ENCODE measurements at regions of chr18 and their contacts with region 1.

Region 1: DNA sequence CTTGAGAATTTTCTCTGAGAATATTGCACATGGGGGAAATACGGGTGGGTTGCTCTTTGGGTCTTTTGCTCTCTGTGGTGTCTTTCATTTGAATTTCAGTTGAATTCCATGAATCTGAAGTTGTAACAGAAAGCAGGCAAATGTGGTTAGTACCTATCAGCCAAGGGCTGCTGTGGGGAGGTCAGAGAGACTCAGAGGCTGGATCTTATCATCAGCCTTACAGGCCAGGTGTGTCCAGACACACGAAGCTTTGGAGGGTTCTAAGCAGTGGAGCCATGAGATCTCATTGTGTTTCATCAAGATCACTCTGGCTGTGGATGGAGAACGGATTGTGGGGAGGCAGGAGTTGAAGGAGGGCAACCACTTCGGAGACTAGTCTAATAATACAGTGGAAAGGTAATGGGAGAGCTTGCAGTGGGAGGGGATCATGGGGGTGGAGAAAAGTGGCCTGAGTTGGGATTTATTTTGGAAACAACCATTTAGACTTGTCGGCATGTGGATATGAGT is 68.1 kb downstream of the GNAL start:
- DNase-seq: no peak
- H3K27ac ChIP-seq: no peak overlapping the region
- CTCF ChIP-seq: no peak

Region 2: DNA sequence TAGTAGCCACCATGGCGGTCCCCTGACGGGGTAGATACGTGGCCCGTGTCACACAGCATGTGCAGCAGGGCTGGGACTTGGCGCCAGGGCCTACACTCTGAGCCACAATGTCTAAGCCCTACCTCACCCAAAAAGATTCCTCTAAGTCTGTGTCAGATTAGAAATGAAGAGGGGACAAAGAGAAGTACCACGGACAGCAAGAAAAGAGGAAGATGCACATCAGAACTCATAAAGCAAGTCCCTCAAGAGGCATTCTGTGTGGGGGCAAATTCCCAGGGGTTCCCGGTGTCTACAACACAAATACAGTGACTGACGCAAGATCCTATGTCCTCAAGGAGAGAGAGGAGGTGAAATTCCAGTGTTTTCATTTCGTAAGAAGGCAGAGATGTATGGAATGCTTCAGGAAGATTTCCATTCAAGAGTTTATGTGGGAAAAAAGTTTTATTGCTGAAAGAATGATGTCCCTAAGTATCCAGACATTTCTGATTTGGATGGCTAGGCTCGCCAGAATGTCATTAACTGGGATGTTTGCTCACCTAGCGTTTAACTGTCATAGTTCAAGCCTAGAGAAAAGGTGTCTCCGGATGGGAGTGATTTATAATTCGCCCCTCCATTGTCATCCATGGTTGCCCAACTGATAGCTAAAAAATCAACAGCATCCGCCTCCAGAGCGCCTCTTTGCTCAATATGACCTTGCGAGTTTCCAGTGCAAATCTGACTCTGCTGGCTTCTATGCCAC is 18.5 kb after region 1 on chr18:
- CTCF ChIA-PET with region 1: no interaction called
- POLR2A ChIA-PET with region 1: interaction called, 10 read pairs
- DNase-seq: no peak
- H3K27ac ChIP-seq: no peak overlapping the region
- CTCF ChIP-seq: no peak

Region 3: DNA sequence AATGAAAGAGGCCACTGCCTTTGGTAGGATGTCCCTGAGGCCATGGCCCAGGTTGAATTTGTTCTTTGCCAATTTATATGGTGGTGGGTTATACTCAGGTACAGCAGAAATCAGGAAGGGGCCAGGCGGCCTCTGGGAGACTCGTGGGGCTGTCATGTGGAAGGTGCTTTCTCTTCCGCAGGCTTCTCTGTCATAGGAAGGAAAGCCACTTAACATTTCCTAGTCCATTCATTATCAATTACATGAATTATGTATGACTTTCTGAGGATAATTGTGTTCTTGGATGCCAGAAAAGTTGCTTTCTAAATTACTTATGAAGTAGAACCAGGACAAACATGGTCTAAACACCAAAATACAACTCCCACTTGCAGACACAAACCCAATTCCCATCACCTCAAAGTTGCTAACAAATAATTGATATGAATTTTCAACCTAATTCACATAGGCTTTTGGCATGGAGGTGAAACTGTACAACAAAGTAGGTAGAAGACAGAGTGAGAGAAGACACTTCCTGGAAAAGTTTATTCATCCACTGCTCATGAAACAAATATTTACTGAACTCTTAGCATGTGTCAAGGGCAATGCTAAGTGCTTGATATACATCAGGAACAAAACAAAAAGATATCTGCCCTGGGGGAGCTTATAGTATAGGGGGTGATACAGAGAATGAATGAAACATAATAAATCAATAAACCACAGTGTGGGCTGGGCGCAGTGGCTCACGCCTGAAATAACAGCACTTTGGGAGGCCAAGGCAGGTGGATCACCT is 43.6 kb after region 1 on chr18:
- CTCF ChIA-PET with region 1: no interaction called
- POLR2A ChIA-PET with region 1: no interaction called
- DNase-seq: no peak
- H3K27ac ChIP-seq: no peak overlapping the region
- CTCF ChIP-seq: no peak